ENCODE measurements at regions of chr1 and their contacts with region 1.

Region 1: GRCh38 chr1:51421964-51422363 is 91.6 kb upstream of the TTC39A start:
- DNase-seq: no peak
- ATAC-seq: peak; percentile 76 to 80

Region 2: DNA sequence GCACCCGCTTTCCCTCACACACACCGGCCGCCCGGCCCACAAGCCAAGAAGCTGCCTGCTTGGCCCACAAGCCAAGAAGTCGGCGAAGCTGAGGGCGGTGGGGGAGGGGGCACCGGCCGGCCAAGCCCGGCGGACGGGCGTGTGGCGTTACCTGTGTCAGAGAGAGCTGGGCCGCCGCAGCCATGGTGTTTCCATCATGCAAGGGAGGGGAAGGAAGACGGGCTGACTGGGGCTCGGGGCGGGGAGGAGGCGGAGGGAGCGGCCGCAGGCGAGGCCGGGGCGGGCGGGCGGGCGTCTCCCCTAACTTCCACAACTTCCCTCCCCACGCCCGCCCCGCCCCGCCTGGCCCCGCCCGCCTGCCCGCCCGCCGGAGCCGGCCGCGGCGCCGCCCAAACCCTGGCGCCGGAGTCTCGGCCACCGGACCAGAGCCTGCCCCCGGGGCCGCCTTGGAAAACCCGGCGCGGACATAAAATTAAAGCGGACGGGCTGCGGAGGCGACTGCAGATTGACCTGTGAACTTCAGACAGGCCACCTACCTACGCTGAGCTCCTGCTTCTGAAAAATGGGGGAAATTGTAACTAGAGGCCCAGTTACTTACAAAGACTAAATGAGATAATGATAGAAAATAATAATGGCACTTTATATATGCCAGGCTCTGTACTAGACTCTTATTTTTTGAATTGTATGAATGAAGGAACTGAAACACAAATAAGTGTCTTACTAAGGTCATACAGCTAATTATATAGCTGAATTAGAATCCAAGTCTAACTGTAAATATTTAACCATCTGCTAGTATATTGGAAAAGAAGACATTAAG is 97.3 kb after region 1 on chr1 and contains the start of gene EPS15:
- intact Hi-C with region 1: loop called in 1 of 2 experiments (anchors 5 kb)
- DNase-seq: peak; percentile 88
- ATAC-seq: peak; percentile 84 to 90
- total RNA-seq, gene EPS15: 59.5 to 64.8 TPM

Region 3: DNA sequence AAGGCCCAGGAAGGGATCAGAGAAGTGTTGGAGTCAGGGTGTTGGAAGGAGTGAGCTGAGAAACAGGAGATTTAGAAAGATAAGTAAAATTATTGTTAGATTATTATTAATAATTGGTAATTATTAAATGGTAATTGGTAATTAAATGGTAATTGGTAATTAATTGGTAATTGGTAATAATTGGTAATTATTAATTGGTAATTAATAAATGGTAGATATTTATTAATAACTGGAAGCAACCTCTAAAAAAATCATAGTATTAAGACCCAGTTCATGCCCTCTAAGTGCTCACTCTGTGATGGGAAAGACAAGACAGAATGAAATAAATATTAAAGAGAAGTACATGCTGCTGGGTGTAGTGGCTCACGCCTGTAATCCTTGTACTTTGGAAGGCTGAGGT is 110.9 kb after region 1 on chr1:
- intact Hi-C with region 1: no loop called
- DNase-seq: no peak
- ATAC-seq: no peak